WTC11 (cell line): ENCODE measurements at regions of chr7 and their contacts with region 1.

Region 1: DNA sequence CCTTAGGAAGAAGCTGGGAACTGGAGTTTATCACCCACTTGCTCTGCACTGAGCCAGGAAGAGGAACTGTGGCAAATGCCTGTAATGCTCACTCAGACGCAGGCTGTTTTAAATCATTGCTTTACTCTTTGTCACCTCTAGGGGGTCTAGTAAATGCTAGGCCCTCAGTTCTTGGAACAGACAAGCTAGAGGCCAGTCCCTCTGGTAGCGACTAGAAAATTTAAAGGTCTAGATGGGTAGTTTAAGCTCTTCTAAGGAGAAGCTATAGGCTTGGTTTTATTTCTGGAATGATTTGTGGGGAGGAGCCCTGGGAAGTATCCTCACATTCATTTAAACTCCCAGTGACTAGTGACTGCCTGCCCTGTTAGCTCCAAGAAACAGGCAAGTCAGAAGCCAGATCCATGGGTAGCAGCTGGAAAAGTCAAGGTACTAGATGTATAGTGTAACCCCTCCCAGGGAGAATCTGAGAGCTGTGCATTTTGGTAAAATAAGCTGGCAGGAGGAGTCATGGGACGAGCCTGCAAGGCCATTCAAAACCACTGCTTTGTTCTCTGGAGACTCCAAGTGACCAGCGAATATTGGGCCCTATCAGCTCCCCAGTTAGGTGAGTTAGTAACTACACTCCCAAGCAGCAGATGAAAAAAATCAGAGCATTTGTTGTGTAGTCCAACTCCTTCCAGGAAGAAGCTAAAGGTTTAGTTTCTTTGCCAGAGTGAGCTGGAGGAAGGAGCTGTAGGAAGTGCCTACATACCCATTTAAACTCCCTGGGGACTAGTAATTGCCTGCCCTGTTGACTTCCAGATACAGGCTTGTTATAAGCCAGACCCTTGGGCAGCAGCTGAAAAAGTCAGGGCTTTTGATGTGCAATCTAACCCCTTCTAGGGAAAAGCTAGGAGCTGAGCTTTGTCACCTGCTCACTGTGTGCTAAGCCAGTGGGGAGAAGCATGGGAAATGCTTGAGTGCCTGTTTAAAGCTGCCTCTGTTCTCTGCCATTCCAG is 68.9 kb downstream of the DYNC1I1 start:
- DNase-seq: no peak
- ATAC-seq: peak; percentile 94
- H3K4me3 Mint-ChIP-seq: no peak overlapping the region
- H3K27ac Mint-ChIP-seq: no peak overlapping the region; the same call in 1 of the 2 replicates
- H3K4me1 Mint-ChIP-seq: peaks cover 45% of the 10 kb centered on the region
- H3K27me3 Mint-ChIP-seq: peaks cover 2% of the 10 kb centered on the region; the same call in 1 of the 2 replicates
- CTCF ChIP-seq: peak; percentile 55

Region 2: DNA sequence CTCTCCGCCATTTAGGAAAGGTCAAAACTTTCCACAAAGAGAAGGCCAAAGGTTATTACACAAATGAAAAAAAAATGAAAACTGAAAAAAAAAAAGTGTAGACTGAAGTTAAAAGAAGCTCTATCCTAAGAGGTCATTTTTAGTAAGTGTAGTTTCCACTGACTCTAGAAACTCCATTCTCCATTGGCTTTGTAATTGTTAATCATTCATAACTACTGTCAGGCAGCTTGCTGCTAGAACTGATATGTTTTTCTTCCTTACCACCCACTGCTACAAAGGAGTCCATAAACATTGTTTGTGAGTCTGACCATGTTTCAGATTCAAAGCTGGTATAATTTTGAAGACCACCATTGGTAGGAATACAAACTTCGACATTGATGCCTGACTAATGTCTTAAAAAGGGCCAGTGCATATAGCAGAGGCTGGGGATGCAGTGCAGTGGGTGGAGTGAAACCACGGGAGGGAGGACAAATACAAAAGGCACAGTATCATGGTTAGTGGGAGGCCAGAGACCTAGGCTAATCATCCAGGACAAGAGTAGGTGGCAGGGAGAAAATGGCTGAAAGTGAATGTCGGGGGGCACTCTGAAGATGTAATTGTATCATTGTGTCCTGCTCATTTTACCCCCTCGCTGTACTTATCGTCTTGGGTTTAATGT is 85.8 kb before region 1 on chr7:
- CTCF ChIA-PET with region 1: interaction called, 10 read pairs
- POLR2A ChIA-PET with region 1: no interaction called
- DNase-seq: no peak
- ATAC-seq: peak; percentile 51; the same call in 1 of the 2 replicates
- H3K4me3 Mint-ChIP-seq: no peak overlapping the region
- H3K27ac Mint-ChIP-seq: no peak overlapping the region
- H3K4me1 Mint-ChIP-seq: no peaks in the 10 kb centered on the region
- H3K27me3 Mint-ChIP-seq: no peaks in the 10 kb centered on the region; the same call in 1 of the 2 replicates
- CTCF ChIP-seq: no peak

Region 3: DNA sequence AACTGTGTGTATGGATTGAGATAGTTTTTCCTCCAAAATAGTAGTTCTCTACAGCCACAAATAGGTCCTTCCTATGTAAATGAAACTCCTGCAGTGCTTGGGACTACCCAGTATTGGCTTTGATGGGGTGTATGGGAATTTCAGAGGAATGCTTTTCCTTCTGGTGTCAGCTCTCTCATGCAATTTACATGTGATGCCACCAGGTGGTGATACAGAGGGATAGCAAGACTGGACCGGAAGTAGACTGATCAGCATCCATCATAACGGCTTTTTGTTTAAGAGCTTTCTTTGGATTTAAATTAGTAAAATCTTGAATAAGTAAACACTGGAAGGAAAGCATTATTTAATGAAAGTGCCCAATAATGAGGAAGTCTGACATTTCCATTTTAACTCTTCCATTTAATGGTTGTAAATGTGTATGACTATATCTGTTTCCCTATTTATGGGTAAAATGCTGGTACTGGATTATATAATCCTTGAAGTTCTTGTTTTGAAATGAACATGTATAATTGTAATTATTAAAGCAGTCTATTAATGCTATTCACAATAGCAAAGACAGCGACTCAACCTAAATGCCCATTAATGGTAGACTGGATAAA is 46.2 kb before region 1 on chr7:
- CTCF ChIA-PET with region 1: interaction called, 44 read pairs
- POLR2A ChIA-PET with region 1: no interaction called
- DNase-seq: no peak
- ATAC-seq: peak; percentile 89
- H3K4me3 Mint-ChIP-seq: no peak overlapping the region
- H3K27ac Mint-ChIP-seq: no peak overlapping the region
- H3K4me1 Mint-ChIP-seq: peaks cover 11% of the 10 kb centered on the region
- H3K27me3 Mint-ChIP-seq: peaks cover 61% of the 10 kb centered on the region
- CTCF ChIP-seq: peak; percentile 66

Region 4: DNA sequence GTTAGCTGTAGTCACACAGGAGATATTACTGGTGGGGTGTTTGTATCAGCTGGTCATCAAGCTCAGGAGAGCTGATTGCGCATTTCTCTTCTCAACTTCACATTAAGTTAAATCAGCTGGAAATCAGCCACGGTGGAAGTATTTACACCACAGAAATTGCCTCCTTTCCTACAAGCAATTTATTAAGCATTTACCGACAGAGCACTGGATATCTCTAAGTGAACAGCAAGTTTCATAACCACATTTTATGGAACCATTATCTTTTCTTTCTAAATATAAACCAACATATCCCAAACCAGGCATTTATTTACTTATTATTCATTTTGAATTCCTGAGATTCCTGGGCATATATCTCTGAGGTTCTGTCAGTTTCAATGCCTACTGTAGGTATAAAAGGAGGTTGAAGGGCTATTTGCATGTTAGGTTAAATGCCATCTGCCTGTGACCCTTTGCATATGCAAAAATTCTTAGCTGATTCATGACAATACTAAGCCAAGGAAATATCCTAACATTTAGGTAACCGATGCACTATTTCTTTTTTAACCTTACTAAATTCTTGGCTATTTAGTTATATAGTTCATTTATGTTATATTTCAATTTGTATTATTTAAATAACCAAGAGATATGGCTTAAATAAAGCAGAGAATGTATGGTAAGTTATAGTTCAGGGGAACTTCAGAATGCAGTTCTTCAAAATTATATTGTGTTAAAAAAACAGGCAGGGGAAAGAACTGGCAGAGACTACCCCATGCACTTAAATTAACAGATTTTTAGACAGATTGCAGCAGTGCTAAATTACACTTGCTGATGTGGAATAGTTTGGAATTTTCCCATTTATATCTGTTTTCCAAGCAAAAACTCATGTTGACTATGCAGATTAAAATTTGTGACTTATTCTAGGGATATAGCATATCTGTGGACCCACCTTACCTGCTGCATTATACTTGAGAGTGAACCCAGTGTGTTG is 12.1 kb before region 1 on chr7:
- CTCF ChIA-PET with region 1: interaction called, 39 read pairs
- POLR2A ChIA-PET with region 1: no interaction called
- DNase-seq: no peak
- ATAC-seq: peak; percentile 82
- H3K4me3 Mint-ChIP-seq: peak overlapping the region; percentile 31
- H3K27ac Mint-ChIP-seq: no peak overlapping the region
- H3K4me1 Mint-ChIP-seq: peaks cover 44% of the 10 kb centered on the region
- H3K27me3 Mint-ChIP-seq: no peaks in the 10 kb centered on the region; the same call in 1 of the 2 replicates
- CTCF ChIP-seq: no peak

Region 5: DNA sequence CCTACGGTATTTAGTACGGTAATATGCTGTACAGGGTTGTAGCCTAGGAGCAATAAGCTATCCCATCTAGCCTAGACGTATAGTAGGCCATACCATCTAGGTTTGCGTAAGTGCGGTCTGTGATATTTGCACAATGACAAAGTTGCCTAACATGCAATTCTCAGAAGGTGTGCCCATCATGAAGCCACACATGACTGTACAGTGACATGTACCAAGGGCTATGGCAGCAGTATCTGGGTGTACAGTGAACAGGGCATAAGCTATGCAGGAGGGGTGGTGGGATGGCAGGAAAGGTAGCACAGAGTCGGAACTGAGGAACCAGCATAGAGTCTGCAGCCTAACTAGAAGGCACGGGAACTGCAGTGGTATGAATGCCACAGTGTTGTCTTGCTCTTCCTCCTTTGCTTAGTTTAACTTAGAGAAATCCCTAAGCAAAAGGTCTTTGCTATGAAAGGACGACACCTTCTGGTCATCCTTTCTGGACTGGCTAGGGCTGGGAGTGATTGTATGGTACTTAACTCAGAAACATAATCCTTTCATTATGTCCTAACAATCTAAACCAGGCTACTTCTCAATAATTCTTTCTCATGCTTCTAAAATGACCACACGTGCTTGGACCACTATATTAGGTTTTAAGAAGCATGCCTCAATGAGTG is 24.6 kb after region 1 on chr7:
- CTCF ChIA-PET with region 1: interaction called, 35 read pairs
- POLR2A ChIA-PET with region 1: no interaction called
- DNase-seq: no peak
- ATAC-seq: peak; percentile 86
- H3K4me3 Mint-ChIP-seq: no peak overlapping the region
- H3K27ac Mint-ChIP-seq: peak overlapping the region; percentile 7; the same call in 1 of the 2 replicates
- H3K4me1 Mint-ChIP-seq: peaks cover 15% of the 10 kb centered on the region
- H3K27me3 Mint-ChIP-seq: no peaks in the 10 kb centered on the region
- CTCF ChIP-seq: no peak

Region 6: GRCh38 chr7:96084881-96085551 is 243.8 kb after region 1 on chr7:
- CTCF ChIA-PET with region 1: no interaction called
- POLR2A ChIA-PET with region 1: no interaction called
- DNase-seq: no peak
- ATAC-seq: no peak
- H3K4me3 Mint-ChIP-seq: no peak overlapping the region
- H3K27ac Mint-ChIP-seq: no peak overlapping the region
- H3K4me1 Mint-ChIP-seq: no peaks in the 10 kb centered on the region
- H3K27me3 Mint-ChIP-seq: no peaks in the 10 kb centered on the region
- CTCF ChIP-seq: no peak